CD8-positive, alpha-beta memory T cell (primary cell): ENCODE measurements at regions of chr2 and their contacts with region 1.

Region 1: DNA sequence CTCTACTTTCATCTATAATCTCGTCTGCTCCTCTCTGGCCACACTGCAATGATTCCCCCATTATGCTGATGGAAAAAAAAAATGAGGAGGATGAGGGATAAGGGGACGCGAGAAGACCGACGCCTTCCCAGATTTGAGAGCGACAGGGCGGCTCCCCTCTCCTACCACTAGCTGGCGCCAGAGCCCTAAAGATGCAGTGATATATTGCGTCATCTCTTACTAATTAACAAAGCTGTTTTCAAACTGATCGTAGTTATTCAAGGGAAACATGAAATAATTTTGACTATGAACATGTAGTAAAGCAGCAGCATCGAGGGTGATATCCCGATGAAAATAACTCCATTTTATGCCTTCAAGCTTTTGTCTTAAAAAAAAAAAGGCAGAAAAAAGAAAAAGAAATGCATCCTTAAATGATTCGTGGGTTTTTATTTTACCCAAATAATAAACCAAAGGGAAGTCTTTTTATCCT is 48.0 kb upstream of the HNRNPA3 start:
- DNase-seq: peak; percentile 65 to 85 (median 72)
- H3K4me3 ChIP-seq: peak overlapping the region; percentile 47
- H3K4me3 Mint-ChIP-seq: no peak overlapping the region
- H3K27ac ChIP-seq: peak overlapping the region; percentile 32
- H3K27ac Mint-ChIP-seq: no peak overlapping the region
- H3K4me1 ChIP-seq: peaks cover 18% of the 10 kb centered on the region
- H3K4me1 Mint-ChIP-seq: peaks cover 6 to 16% (median 16%) of the 10 kb centered on the region in 3 donors
- H3K27me3 ChIP-seq: no peaks in the 10 kb centered on the region
- H3K27me3 Mint-ChIP-seq: peaks cover 0 to 2% of the 10 kb centered on the region in 2 donors

Region 2: GRCh38 chr2:177141866-177142265 is 22.8 kb before region 1 on chr2:
- CTCF ChIA-PET with region 1: no interaction called
- POLR2A ChIA-PET with region 1: no interaction called
- DNase-seq: no peak
- H3K4me3 ChIP-seq: no peak overlapping the region
- H3K4me3 Mint-ChIP-seq: no peak overlapping the region
- H3K27ac ChIP-seq: no peak overlapping the region
- H3K27ac Mint-ChIP-seq: no peak overlapping the region
- H3K4me1 ChIP-seq: no peaks in the 10 kb centered on the region
- H3K4me1 Mint-ChIP-seq: no peaks in the 10 kb centered on the region
- H3K27me3 ChIP-seq: peaks cover 2% of the 10 kb centered on the region
- H3K27me3 Mint-ChIP-seq: peaks cover 12 to 32% of the 10 kb centered on the region in 2 donors

Region 3: GRCh38 chr2:177195194-177195593 is 30.6 kb after region 1 on chr2:
- CTCF ChIA-PET with region 1: interaction called, 10 read pairs
- POLR2A ChIA-PET with region 1: interaction called, 3 read pairs
- DNase-seq: no peak
- H3K4me3 ChIP-seq: no peak overlapping the region
- H3K4me3 Mint-ChIP-seq: no peak overlapping the region
- H3K27ac ChIP-seq: no peak overlapping the region
- H3K27ac Mint-ChIP-seq: no peak overlapping the region
- H3K4me1 ChIP-seq: no peaks in the 10 kb centered on the region
- H3K4me1 Mint-ChIP-seq: peaks cover 0 to 4% (median 2%) of the 10 kb centered on the region in 3 donors
- H3K27me3 ChIP-seq: no peaks in the 10 kb centered on the region
- H3K27me3 Mint-ChIP-seq: no peaks in the 10 kb centered on the region

Region 4: DNA sequence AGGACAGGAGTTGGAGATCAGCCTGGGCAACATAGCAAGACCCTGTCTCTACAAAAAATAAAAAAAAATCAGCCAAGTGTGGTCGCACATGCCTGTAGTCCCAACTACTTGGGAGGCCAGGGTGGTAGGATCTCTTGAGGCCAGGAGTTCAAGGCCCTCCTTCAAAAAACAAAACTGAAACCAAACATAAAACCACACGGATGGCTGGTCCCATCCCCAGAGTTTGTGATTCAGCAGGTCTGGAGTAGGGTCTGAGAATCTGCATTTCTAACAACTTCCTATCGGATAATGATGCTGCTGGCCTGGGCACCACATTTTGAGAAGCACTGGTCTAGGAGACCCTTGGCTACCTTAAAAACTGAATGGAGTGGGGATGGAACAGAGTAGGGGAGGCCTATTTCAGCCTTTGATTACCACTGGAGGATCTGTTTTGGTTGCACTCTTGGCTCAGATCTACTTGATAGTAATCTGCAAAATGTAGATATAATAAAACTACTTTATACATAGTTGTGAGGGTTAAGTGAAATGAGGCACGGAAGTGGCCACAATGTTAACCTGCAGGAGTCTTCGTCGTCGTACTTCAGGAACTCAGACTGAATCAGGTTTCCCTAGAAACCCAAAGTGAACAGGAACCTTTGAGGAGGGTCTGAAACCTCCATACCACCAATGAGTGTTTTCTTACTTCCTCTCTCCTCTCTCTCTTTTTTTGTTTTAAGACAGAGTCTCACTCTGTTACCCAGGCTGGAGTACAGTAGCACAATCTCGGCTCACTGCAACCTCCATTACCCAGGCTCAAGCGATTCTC is 125.4 kb after region 1 on chr2:
- CTCF ChIA-PET with region 1: interaction called, 79 read pairs
- POLR2A ChIA-PET with region 1: no interaction called
- DNase-seq: peak in 1 of 5 donors; percentile 36
- H3K4me3 ChIP-seq: peak overlapping the region; percentile 17
- H3K4me3 Mint-ChIP-seq: peak overlapping the region in 6 of 7 donors; percentile 57 to 83 (median 76)
- H3K27ac ChIP-seq: no peak overlapping the region
- H3K27ac Mint-ChIP-seq: peak overlapping the region; percentile 13 to 93 (median 86)
- H3K4me1 ChIP-seq: peaks cover 15% of the 10 kb centered on the region
- H3K4me1 Mint-ChIP-seq: peaks cover 11 to 20% (median 12%) of the 10 kb centered on the region in 3 donors
- H3K27me3 ChIP-seq: no peaks in the 10 kb centered on the region
- H3K27me3 Mint-ChIP-seq: peaks cover 0 to 5% of the 10 kb centered on the region in 2 donors

Region 5: GRCh38 chr2:177332041-177332991 is 167.7 kb after region 1 on chr2:
- CTCF ChIA-PET with region 1: interaction called, 103 read pairs
- POLR2A ChIA-PET with region 1: no interaction called
- DNase-seq: peak in 3 of 5 donors; percentile 1 to 63 (median 37)
- H3K4me3 ChIP-seq: no peak overlapping the region
- H3K4me3 Mint-ChIP-seq: peak overlapping the region in 1 of 7 donors; percentile 23
- H3K27ac ChIP-seq: no peak overlapping the region
- H3K27ac Mint-ChIP-seq: no peak overlapping the region
- H3K4me1 ChIP-seq: peaks cover 23% of the 10 kb centered on the region
- H3K4me1 Mint-ChIP-seq: peaks cover 3 to 5% (median 4%) of the 10 kb centered on the region in 3 donors
- H3K27me3 ChIP-seq: no peaks in the 10 kb centered on the region
- H3K27me3 Mint-ChIP-seq: no peaks in the 10 kb centered on the region

Region 6: GRCh38 chr2:177413703-177414102 is 249.1 kb after region 1 on chr2:
- CTCF ChIA-PET with region 1: interaction called, 38 read pairs
- POLR2A ChIA-PET with region 1: interaction called, 4 read pairs
- DNase-seq: no peak
- H3K4me3 ChIP-seq: no peak overlapping the region
- H3K4me3 Mint-ChIP-seq: no peak overlapping the region
- H3K27ac ChIP-seq: no peak overlapping the region
- H3K27ac Mint-ChIP-seq: peak overlapping the region in 3 of 8 donors; percentile 2 to 21 (median 8)
- H3K4me1 ChIP-seq: no peaks in the 10 kb centered on the region
- H3K4me1 Mint-ChIP-seq: peaks cover 30 to 56% (median 41%) of the 10 kb centered on the region in 3 donors
- H3K27me3 ChIP-seq: no peaks in the 10 kb centered on the region
- H3K27me3 Mint-ChIP-seq: no peaks in the 10 kb centered on the region